MCF 10A (cell line): ENCODE measurements at regions of chr1 and their contacts with region 1.

Region 1: GRCh38 chr1:246566128-246566812 is at the starts of genes CNST and TFB2M:
- DNase-seq: peak; percentile 100
- H3K4me3 Mint-ChIP-seq: peak within 1 kb of the TSS; percentile 93
- H3K27ac Mint-ChIP-seq: peak within 1 kb of the TSS; percentile 97
- H3K4me1 Mint-ChIP-seq: peaks cover 34% of the 10 kb centered on the region
- H3K27me3 Mint-ChIP-seq: no peaks in the 10 kb centered on the region
- CTCF ChIP-seq: no peak
- total RNA-seq, gene CNST: 44.8 and 48.3 TPM in 2 replicates
- total RNA-seq, gene TFB2M: 38.3 and 52.0 TPM in 2 replicates

Region 2: DNA sequence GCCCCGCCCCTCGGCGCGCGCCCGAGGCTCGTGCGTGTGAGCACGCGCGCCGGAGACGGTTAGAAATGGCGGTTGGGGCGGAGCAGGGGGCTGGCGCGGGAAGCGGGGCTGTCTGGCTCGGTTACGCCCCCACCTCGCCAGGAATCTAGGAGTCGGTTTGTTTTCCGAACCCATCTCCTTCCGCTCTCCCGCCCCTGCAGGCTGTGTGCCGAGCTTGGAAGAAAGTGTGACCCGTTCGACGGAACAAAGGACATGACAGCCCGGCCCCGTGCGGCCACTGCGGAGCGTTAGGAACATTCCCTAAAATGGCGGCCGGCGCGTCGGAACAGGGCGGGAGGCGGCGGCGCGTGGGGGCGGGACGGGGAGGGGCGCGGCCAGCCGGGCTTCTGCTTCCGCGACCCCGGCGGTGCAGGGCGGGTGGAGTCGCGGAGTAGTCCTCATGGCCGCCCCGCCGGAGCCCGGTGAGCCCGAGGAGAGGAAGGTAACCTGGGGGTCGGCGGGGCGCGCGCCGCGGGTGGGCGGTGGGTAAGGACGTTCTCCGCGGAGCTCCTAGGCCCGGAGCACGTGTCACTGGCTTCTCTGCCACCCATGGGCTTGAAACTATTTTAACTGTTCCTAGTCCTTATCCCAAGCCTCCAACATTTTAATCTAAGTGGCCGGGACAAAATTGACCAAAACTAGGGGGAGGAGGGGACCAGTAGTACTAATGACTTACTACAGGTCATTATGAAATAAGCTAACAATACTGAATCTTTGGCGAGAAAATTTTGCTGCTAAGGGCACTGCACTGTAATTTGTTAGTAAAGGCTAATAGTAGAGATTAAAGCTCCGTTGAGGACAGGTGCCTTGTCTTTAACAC is 1730.8 kb before region 1 on chr1 and contains the start of gene COX20:
- CTCF ChIA-PET with region 1: interaction called, 4 read pairs
- POLR2A ChIA-PET with region 1: interaction called, 16 read pairs
- intact Hi-C with region 1: no loop called
- DNase-seq: peak; percentile 98
- H3K4me3 Mint-ChIP-seq: peak within 1 kb of the TSS; percentile 81
- H3K27ac Mint-ChIP-seq: peak within 1 kb of the TSS; percentile 99
- H3K4me1 Mint-ChIP-seq: peaks cover 33% of the 10 kb centered on the region
- H3K27me3 Mint-ChIP-seq: no peaks in the 10 kb centered on the region
- CTCF ChIP-seq: no peak
- total RNA-seq, gene COX20: 44.6 and 46.1 TPM in 2 replicates

Region 3: GRCh38 chr1:246544001-246544400 is 22.3 kb before region 1 on chr1:
- CTCF ChIA-PET with region 1: no interaction called
- POLR2A ChIA-PET with region 1: interaction called, 18 read pairs
- intact Hi-C with region 1: no loop called
- DNase-seq: no peak
- H3K4me3 Mint-ChIP-seq: no peak overlapping the region
- H3K27ac Mint-ChIP-seq: peak overlapping the region; percentile 12
- H3K4me1 Mint-ChIP-seq: no peaks in the 10 kb centered on the region
- H3K27me3 Mint-ChIP-seq: no peaks in the 10 kb centered on the region
- CTCF ChIP-seq: no peak

Region 4: DNA sequence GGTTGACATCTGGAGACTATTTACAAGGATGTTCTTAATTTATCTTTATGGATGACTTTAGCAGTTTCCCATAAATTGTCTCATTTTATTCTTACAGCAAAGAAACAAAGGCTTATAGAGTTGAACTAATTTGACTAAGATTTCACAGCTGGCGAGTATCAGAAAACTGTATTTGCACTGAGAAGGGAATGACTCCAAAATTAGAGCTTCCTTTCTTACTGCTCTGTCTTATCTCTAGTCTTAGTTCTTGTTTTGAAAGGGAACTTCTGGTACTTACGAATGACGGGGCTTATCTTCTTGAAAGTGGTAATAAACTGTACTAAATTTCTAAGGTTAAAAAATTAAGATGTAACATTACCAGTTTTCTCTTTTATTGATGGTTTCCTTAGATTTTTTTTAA is 13.5 kb after region 1 on chr1:
- CTCF ChIA-PET with region 1: interaction called, 10 read pairs
- POLR2A ChIA-PET with region 1: interaction called, 43 read pairs
- intact Hi-C with region 1: no loop called
- DNase-seq: no peak
- H3K4me3 Mint-ChIP-seq: no peak overlapping the region
- H3K27ac Mint-ChIP-seq: no peak overlapping the region
- H3K4me1 Mint-ChIP-seq: peaks cover 22% of the 10 kb centered on the region
- H3K27me3 Mint-ChIP-seq: no peaks in the 10 kb centered on the region
- CTCF ChIP-seq: no peak

Region 5: GRCh38 chr1:246597340-246597739 is 31.1 kb after region 1 on chr1:
- CTCF ChIA-PET with region 1: interaction called, 5 read pairs
- POLR2A ChIA-PET with region 1: interaction called, 26 read pairs
- intact Hi-C with region 1: no loop called
- DNase-seq: peak; percentile 56
- H3K4me3 Mint-ChIP-seq: no peak overlapping the region
- H3K27ac Mint-ChIP-seq: no peak overlapping the region
- H3K4me1 Mint-ChIP-seq: no peaks in the 10 kb centered on the region
- H3K27me3 Mint-ChIP-seq: no peaks in the 10 kb centered on the region
- CTCF ChIP-seq: no peak

Region 6: DNA sequence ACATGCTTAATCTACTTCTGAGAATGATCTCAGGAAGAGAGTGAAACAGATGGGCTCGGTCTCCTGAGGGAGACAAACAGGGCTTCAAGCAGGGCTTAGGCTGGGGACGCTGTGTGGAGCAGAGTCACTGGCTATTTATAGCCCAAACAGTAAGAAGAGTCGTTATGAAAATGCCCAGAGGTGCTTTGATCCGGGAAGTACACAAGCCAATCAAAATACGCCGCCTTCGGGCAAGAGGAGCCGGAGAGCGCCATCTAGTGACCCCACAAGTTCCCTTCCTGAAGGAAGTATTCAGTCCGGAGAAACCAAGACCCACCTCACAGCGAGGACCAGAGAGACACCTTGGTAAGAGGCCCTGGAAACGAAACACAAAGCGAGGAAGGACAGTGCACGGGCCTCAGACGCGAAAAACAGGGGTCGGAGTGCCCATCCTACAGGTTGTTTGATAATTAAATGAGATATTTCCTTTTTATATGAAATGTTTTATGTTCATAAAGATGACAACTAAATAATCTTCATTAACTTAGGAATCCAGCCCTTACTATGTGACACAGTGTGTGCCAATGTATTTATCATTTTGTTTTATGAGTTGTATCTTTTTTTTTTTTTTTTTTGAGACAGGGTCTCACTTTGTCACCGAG is 132.9 kb after region 1 on chr1:
- CTCF ChIA-PET with region 1: interaction called, 4 read pairs
- POLR2A ChIA-PET with region 1: interaction called, 4 read pairs
- intact Hi-C with region 1: loop called (anchors 1 kb)
- DNase-seq: peak; percentile 98
- H3K4me3 Mint-ChIP-seq: peak overlapping the region; percentile 69
- H3K27ac Mint-ChIP-seq: peak overlapping the region; percentile 76
- H3K4me1 Mint-ChIP-seq: peaks cover 14% of the 10 kb centered on the region
- H3K27me3 Mint-ChIP-seq: no peaks in the 10 kb centered on the region
- CTCF ChIP-seq: peak; percentile 96